ENCODE measurements at regions of chr1 and their contacts with region 1.

Region 1: GRCh38 chr1:6108937-6109614 is 63.4 kb downstream of the KCNAB2 start:
- DNase-seq: peak; percentile 43
- H3K4me3 ChIP-seq: no peak overlapping the region
- H3K27ac ChIP-seq: no peak overlapping the region
- H3K4me1 ChIP-seq: no peaks in the 10 kb centered on the region
- CTCF ChIP-seq: peak; percentile 73

Region 2: GRCh38 chr1:5888606-5889211 is 220.4 kb before region 1 on chr1:
- CTCF ChIA-PET with region 1: no interaction called
- POLR2A ChIA-PET with region 1: no interaction called
- intact Hi-C with region 1: no loop called
- DNase-seq: no peak
- H3K4me3 ChIP-seq: no peak overlapping the region
- H3K27ac ChIP-seq: no peak overlapping the region
- H3K4me1 ChIP-seq: no peaks in the 10 kb centered on the region
- CTCF ChIP-seq: no peak

Region 3: DNA sequence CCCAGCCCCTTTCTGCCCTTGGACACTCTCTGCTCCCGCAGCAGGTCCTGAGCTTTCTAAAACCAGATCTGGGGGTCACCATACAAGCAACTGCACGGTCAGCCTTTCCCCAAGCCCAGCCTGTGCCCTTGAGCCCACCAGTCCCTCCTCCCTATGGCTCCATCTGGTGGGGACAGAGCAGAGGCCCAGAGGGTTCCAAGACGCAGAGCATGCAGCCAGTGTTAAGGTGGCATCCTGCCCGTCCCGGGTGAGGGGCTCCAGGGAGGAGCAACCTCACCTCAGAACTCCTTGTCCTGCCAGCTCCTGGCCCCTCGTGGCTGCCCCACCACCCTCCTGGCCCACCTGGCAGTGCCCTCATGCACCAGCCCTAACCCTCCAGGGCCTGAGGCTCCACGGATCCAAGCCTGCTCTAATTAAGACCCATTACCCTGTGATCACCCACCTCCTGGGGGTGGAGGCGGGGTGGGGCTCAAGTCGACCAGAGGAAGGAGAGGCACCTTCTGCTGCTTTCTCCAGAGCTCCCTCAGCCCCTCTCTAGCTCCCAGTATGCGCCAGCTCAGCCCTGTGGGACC is 62.6 kb after region 1 on chr1:
- CTCF ChIA-PET with region 1: no interaction called
- POLR2A ChIA-PET with region 1: no interaction called
- intact Hi-C with region 1: loop called (anchors 1 kb)
- DNase-seq: peak; percentile 19
- H3K4me3 ChIP-seq: no peak overlapping the region
- H3K27ac ChIP-seq: no peak overlapping the region
- H3K4me1 ChIP-seq: peaks cover 8% of the 10 kb centered on the region
- CTCF ChIP-seq: peak; percentile 43

Region 4: DNA sequence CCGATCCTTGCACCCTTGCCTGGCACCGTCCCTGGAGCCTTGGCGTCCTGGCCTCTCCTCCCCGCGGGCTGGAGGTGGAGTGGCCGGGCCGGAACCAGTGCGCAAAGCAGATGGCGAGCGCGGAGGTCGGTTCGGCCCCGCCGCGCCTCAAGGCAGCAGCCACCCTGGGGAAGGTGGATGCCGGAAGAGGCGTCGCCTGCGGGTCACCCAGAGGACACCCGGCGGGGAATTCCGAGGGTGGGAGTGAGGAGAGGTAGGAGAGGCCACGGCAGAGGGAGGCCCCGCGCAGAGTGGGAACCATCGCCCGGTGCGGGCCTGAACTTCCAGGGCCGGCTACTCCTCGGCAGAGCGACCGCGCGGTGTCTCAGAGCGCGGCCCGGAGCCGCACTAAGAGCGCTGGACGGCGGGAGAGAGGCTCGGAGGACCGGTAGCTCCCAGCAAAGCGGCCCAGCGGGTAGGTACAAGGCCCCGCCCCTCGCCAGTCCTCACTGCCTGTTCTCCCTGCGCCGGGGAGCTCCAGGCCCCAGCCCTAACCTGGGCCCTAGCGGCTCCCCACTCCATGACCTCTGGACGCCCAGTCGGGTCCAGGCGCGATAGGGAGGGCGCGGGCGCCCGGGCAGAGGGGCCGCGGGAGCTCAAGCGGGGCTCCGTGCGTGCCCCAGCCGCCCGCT is 96.9 kb after region 1 on chr1 and contains the start of gene RNF207:
- CTCF ChIA-PET with region 1: no interaction called
- POLR2A ChIA-PET with region 1: no interaction called
- intact Hi-C with region 1: loop called (anchors 1 kb)
- DNase-seq: no peak
- H3K4me3 ChIP-seq: no peak within 1 kb of the TSS
- H3K27ac ChIP-seq: no peak within 1 kb of the TSS
- H3K4me1 ChIP-seq: peaks cover 6% of the 10 kb centered on the region
- CTCF ChIP-seq: no peak
- total RNA-seq, gene RNF207: not detected in 2 replicates